B cell (primary cell): ENCODE measurements at regions of chr1 and their contacts with region 1.

Region 1: GRCh38 chr1:25895365-25895993 is 10.7 kb downstream of the STMN1 start:
- DNase-seq: peak; percentile 94
- ATAC-seq: peak; percentile 100
- H3K4me3 ChIP-seq: no peak overlapping the region
- H3K4me3 Mint-ChIP-seq: no peak overlapping the region
- H3K27ac ChIP-seq: no peak overlapping the region
- H3K27ac Mint-ChIP-seq: peak overlapping the region; percentile 27
- H3K4me1 ChIP-seq: peaks cover 0 to 12% of the 10 kb centered on the region in 2 donors
- H3K4me1 Mint-ChIP-seq: peaks cover 9% of the 10 kb centered on the region
- H3K27me3 ChIP-seq: no peaks in the 10 kb centered on the region
- H3K27me3 Mint-ChIP-seq: no peaks in the 10 kb centered on the region
- CTCF ChIP-seq: peak; percentile 99

Region 2: DNA sequence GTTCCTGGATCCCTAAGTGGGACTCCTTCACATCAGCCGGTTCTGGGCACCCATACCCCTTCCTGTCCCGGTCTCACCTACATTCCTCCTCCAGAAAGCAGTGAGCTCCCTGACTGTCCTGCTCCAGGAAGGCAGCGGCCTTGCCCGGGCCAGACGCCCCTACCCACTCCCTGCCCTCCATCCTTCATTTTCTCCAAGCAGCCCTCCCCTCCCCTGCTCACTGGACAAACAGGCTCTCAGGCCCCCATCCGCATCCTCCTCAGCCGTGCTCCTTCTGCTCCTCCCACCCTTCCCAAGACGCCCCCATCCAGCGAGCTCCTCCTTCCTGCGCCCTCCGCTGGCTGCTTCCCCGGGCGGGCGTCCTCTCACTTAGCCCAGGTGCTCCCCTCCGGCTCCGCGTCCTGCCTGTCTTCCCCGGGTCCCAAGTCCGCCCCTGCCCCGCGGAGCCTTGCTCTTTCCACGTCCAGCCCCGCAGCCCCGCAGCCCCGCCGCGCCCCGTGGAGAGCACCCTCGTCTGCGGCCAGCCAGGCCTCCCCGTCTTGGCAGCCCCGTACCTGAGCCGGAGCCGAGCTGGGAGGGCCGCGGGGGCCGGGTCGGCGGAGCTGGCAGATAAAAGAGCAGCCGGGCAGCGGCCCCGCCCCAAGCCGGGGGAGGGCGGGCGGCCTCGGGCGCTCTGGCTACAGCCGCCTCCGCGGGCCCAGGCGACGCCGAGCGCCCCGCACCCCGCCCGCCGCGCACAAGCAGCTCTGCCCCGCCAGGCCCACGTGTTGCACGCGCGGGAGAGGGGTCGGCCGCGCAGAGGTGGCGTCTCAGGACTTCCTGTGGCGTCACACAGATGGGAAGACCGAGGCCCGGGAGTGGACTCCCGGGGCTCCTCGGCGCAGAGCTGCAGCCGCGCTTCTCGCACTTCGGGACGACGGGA is 20.3 kb before region 1 on chr1 and contains the start of gene PAQR7:
- CTCF ChIA-PET with region 1: interaction called, 11 read pairs
- POLR2A ChIA-PET with region 1: interaction called, 5 read pairs
- intact Hi-C with region 1: no loop called
- DNase-seq: peak; percentile 70
- ATAC-seq: peak; percentile 87
- H3K4me3 ChIP-seq: peak within 1 kb of the TSS in 4 of 5 experiments; percentile 50 to 70 (median 62)
- H3K4me3 Mint-ChIP-seq: peak within 1 kb of the TSS; percentile 90
- H3K27ac ChIP-seq: peak within 1 kb of the TSS in 1 of 2 donors; percentile 40
- H3K27ac Mint-ChIP-seq: peak within 1 kb of the TSS; percentile 78
- H3K4me1 ChIP-seq: peaks cover 21 to 41% of the 10 kb centered on the region in 2 donors
- H3K4me1 Mint-ChIP-seq: peaks cover 20% of the 10 kb centered on the region
- H3K27me3 ChIP-seq: no peaks in the 10 kb centered on the region
- H3K27me3 Mint-ChIP-seq: no peaks in the 10 kb centered on the region
- CTCF ChIP-seq: no peak
- total RNA-seq, gene PAQR7: 5.5 and 6.6 TPM in 2 replicates

Region 3: DNA sequence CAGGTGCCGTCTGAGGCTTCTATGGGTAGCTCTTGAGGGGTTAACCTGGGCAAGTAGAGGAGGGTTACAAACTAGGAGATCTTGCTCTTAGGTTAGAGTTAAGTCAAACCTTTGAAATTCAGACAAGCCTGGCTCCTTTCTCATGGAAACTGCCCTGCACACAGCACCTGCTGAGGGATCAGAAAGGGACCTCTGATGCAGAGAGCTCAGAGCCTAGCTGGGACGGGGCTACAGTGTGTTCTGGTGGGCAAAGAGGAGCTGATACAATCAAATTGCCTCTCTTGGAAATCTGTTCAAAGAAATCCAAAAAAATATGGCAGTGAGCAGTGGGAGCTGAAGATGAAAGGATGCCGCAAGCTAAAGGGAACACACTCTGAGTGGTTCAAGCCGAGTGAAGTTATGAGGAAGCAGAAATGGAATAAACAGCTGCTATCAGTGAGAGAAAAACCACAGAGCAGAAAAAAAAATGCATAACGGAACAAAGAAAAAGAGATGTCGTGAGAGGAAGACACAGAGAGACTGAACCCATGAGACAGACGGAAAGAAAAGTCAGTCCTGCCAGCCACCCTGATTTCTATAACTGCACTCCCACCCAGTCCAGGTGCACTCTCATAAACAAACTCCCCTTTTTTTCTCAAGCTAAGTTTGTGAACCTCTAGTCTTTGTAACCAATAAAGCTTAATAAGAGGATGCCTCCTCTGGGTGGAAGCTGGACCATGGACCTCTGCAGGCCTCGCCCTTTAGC is 75.8 kb after region 1 on chr1:
- CTCF ChIA-PET with region 1: interaction called, 10 read pairs
- POLR2A ChIA-PET with region 1: interaction called, 4 read pairs
- intact Hi-C with region 1: no loop called
- DNase-seq: peak; percentile 52
- ATAC-seq: peak; percentile 84
- H3K4me3 ChIP-seq: peak overlapping the region in 1 of 5 experiments; percentile 6
- H3K4me3 Mint-ChIP-seq: peak overlapping the region; percentile 49
- H3K27ac ChIP-seq: peak overlapping the region; percentile 1 to 77
- H3K27ac Mint-ChIP-seq: peak overlapping the region; percentile 79
- H3K4me1 ChIP-seq: peaks cover 13 to 22% of the 10 kb centered on the region in 2 donors
- H3K4me1 Mint-ChIP-seq: peaks cover 22% of the 10 kb centered on the region
- H3K27me3 ChIP-seq: no peaks in the 10 kb centered on the region
- H3K27me3 Mint-ChIP-seq: no peaks in the 10 kb centered on the region
- CTCF ChIP-seq: no peak

Region 4: DNA sequence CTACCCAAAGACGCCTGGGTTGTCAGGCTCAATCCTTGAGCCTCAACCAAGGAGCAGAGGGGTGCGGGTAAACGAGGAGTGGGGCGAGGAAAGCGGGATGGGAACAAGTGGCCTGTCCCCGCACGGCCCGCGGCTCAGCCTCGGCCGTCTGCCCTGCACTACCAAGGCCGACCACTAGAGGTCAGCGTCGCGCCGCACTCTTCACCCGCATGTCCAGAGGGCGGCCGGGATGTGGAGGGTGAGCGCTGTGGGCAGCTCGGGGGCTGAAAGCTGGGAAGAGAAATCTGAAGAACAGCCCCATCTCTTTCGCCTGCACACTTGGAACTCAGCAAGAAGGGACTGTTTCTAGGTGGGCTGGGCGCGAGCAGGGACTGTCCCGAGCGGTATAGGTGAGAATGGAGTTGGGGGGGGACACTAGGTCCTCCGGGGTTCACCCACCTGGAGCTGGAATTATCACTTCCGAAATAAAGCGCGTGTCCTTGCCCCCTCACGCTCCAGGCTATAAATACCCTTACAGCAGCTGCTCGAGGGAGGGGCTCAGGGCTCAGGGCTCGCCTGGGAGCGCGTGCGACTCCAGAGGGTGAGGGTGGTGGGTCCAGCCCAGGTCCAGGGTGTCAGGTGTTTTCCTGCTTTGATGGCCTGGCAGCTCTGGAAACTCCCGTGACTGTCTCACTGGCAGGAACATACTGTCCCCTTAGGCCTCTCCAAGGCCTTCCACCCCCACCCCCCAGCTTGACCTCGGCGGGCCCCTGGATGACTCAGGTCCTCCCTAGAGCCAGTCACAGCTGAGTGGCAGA is 140.7 kb after region 1 on chr1:
- CTCF ChIA-PET with region 1: interaction called, 14 read pairs
- POLR2A ChIA-PET with region 1: interaction called, 3 read pairs
- intact Hi-C with region 1: no loop called
- DNase-seq: peak; percentile 88
- ATAC-seq: peak; percentile 74
- H3K4me3 ChIP-seq: peak overlapping the region; percentile 41 to 96 (median 95)
- H3K4me3 Mint-ChIP-seq: peak overlapping the region; percentile 96
- H3K27ac ChIP-seq: peak overlapping the region in 1 of 2 donors; percentile 67
- H3K27ac Mint-ChIP-seq: peak overlapping the region; percentile 89
- H3K4me1 ChIP-seq: peaks cover 10 to 13% of the 10 kb centered on the region in 2 donors
- H3K4me1 Mint-ChIP-seq: peaks cover 13% of the 10 kb centered on the region
- H3K27me3 ChIP-seq: peaks cover 0 to 22% (median 4%) of the 10 kb centered on the region in 4 experiments
- H3K27me3 Mint-ChIP-seq: peaks cover 6% of the 10 kb centered on the region
- CTCF ChIP-seq: peak; percentile 99

Region 5: DNA sequence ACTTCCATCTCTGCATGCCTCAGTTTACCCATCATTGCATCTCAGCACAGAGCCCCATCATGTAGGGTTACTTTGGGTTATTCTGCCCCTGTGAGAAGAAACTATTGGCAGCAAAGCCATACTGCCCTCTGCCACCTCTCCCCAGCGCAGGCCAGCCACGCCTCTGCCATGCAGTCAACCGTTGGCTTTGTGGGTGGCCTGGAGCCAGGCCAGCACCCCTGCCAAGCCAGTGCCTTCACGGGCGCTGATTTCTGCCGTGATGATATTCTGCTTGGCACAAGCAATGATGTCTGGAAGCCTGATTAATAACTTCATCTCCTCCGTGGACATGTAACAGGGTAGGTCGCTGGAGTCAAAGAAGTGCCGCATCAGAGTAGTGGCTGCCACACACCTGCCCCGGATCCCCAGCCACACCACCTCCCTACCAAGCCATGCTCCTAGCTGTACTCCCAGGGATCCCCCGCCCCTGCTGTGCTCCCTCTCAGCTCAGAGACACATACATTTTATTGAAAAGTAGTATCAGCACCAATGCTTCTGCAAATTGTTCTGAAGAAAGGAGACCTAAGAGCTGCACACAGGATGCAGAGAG is 323.5 kb after region 1 on chr1:
- CTCF ChIA-PET with region 1: no interaction called
- POLR2A ChIA-PET with region 1: no interaction called
- intact Hi-C with region 1: no loop called
- DNase-seq: no peak
- ATAC-seq: no peak
- H3K4me3 ChIP-seq: no peak overlapping the region
- H3K4me3 Mint-ChIP-seq: no peak overlapping the region
- H3K27ac ChIP-seq: no peak overlapping the region
- H3K27ac Mint-ChIP-seq: no peak overlapping the region
- H3K4me1 ChIP-seq: no peaks in the 10 kb centered on the region
- H3K4me1 Mint-ChIP-seq: no peaks in the 10 kb centered on the region
- H3K27me3 ChIP-seq: peaks cover 0 to 4% (median 0%) of the 10 kb centered on the region in 4 experiments
- H3K27me3 Mint-ChIP-seq: peaks cover 14% of the 10 kb centered on the region
- CTCF ChIP-seq: no peak